CD14-positive monocyte (primary cell): ENCODE measurements at regions of chr15 and their contacts with region 1.

Region 1: GRCh38 chr15:80160570-80161156 is 7.9 kb downstream of the FAH start:
- DNase-seq: peak; percentile 92 to 96 (median 94)
- H3K4me3 ChIP-seq: peak overlapping the region in 1 of 3 experiments; percentile 21
- H3K4me3 Mint-ChIP-seq: peak overlapping the region in 1 of 2 donors; percentile 37
- H3K27ac ChIP-seq: peak overlapping the region; percentile 79 to 89
- H3K27ac Mint-ChIP-seq: peak overlapping the region; percentile 85 to 94 (median 91)
- H3K4me1 ChIP-seq: peaks cover 42 to 47% of the 10 kb centered on the region in 2 donors
- H3K4me1 Mint-ChIP-seq: peaks cover 44% of the 10 kb centered on the region
- H3K27me3 ChIP-seq: no peaks in the 10 kb centered on the region
- H3K27me3 Mint-ChIP-seq: peaks cover 0 to 3% (median 0%) of the 10 kb centered on the region in 3 donors
- CTCF ChIP-seq: no peak

Region 2: GRCh38 chr15:80058851-80059785 is 101.5 kb before region 1 on chr15 and contains the start of gene ZFAND6:
- intact Hi-C with region 1: loop called in 1 of 2 experiments (anchors 5 kb)
- DNase-seq: peak; percentile 91 to 95 (median 93)
- H3K4me3 ChIP-seq: peak within 1 kb of the TSS; percentile 66 to 92 (median 90)
- H3K4me3 Mint-ChIP-seq: peak within 1 kb of the TSS; percentile 93 to 94
- H3K27ac ChIP-seq: peak within 1 kb of the TSS; percentile 68 to 95
- H3K27ac Mint-ChIP-seq: peak within 1 kb of the TSS; percentile 86 to 96 (median 91)
- H3K4me1 ChIP-seq: peaks cover 16 to 32% of the 10 kb centered on the region in 2 donors
- H3K4me1 Mint-ChIP-seq: peaks cover 34% of the 10 kb centered on the region
- H3K27me3 ChIP-seq: no peaks in the 10 kb centered on the region
- H3K27me3 Mint-ChIP-seq: peaks cover 0 to 2% (median 1%) of the 10 kb centered on the region in 3 donors
- CTCF ChIP-seq: no peak
- polyA plus RNA-seq, gene ZFAND6: 41.6 to 106 (median 99.6) TPM

Region 3: DNA sequence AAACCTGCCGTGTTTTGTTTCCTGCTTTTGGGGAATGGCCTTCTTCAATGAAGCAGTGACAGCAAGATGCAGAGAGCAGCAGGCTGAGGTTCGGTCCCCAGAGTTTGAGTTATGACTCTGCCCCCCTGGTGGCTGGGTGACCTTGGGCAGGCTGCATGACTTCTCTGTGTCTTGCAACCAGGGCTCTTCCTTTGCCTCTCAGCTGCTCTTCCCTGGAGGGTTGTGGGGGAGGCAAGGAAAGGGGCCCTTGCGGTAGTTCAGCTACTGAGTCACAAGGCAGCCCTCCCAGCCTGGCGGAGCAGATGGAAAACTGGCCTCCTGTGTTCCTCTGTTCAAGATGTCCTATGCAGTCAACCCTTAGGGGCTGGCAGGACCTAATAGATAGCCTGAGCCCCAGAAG is 74.2 kb after region 1 on chr15:
- intact Hi-C with region 1: no loop called
- DNase-seq: peak; percentile 3 to 18 (median 6)
- H3K4me3 ChIP-seq: no peak overlapping the region
- H3K4me3 Mint-ChIP-seq: no peak overlapping the region
- H3K27ac ChIP-seq: no peak overlapping the region
- H3K27ac Mint-ChIP-seq: no peak overlapping the region
- H3K4me1 ChIP-seq: no peaks in the 10 kb centered on the region
- H3K4me1 Mint-ChIP-seq: no peaks in the 10 kb centered on the region
- H3K27me3 ChIP-seq: no peaks in the 10 kb centered on the region
- H3K27me3 Mint-ChIP-seq: peaks cover 8 to 19% (median 9%) of the 10 kb centered on the region in 3 donors
- CTCF ChIP-seq: peak; percentile 67

Region 4: GRCh38 chr15:80431635-80432344 is 271.1 kb after region 1 on chr15:
- intact Hi-C with region 1: no loop called
- DNase-seq: no peak
- H3K4me3 ChIP-seq: no peak overlapping the region
- H3K4me3 Mint-ChIP-seq: no peak overlapping the region
- H3K27ac ChIP-seq: no peak overlapping the region
- H3K27ac Mint-ChIP-seq: no peak overlapping the region
- H3K4me1 ChIP-seq: peaks cover 11 to 13% of the 10 kb centered on the region in 2 donors
- H3K4me1 Mint-ChIP-seq: peaks cover 20% of the 10 kb centered on the region
- H3K27me3 ChIP-seq: no peaks in the 10 kb centered on the region
- H3K27me3 Mint-ChIP-seq: peaks cover 0 to 11% (median 3%) of the 10 kb centered on the region in 3 donors
- CTCF ChIP-seq: no peak